Sciatic nerve (tissue), 2 donors: ENCODE measurements at regions of chr7 and their contacts with region 1.

Region 1: DNA sequence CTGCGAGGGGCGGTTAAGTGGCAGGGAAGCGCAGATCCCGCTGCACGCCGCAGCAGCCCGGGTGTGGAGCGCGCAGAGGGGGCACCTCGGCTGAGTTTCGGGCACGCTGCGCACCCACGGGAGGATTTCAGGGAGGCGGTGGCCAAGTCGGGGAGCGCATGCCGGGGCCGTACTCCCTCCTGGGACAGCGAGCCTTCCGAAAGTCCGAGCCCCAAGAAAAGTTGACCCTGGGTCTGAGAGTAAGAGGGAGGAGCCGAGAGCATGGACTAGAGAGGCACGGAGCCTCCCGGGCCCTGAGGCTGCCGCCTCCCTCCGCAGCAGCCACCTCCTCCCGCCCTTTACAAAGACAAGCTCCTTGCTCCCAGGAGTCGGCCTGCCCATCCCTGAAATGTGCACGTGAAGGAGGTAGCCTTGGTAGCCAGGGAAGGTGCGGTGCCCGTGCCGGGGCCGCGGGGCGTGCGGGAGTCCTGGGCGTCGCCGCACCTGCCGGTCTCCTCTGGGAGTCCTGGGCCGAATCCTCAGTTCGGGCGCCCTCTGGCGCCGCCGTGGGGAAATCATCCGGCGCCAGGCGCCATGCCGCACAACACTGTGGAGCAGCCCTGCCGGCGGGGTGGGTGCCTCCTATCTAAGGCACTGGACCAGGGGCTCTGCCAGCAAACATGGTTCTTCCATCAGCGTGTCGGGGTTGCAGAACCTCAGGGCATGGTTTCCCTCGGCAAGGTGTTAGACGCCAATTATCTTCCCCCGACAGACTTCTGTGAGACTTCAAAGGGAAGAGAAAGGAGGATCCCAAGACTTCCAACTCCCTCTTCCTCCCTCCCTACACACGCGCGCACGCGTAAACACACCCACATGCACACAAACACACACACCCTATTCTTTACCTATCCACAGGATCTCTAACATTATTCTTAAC is 104.0 kb downstream of the TRIL start:
- DNase-seq: peak; percentile 88
- ATAC-seq: peak; percentile 98

Region 2: GRCh38 chr7:28389504-28390395 is 464.3 kb before region 1 on chr7:
- intact Hi-C with region 1: loop called (anchors 10 kb)
- DNase-seq: no peak
- ATAC-seq: peak; percentile 73

Region 3: GRCh38 chr7:28921822-28922221 is 67.7 kb after region 1 on chr7:
- intact Hi-C with region 1: no loop called
- DNase-seq: no peak
- ATAC-seq: peak; percentile 87